ENCODE measurements at regions of chr6 and their contacts with region 1.

Region 1: DNA sequence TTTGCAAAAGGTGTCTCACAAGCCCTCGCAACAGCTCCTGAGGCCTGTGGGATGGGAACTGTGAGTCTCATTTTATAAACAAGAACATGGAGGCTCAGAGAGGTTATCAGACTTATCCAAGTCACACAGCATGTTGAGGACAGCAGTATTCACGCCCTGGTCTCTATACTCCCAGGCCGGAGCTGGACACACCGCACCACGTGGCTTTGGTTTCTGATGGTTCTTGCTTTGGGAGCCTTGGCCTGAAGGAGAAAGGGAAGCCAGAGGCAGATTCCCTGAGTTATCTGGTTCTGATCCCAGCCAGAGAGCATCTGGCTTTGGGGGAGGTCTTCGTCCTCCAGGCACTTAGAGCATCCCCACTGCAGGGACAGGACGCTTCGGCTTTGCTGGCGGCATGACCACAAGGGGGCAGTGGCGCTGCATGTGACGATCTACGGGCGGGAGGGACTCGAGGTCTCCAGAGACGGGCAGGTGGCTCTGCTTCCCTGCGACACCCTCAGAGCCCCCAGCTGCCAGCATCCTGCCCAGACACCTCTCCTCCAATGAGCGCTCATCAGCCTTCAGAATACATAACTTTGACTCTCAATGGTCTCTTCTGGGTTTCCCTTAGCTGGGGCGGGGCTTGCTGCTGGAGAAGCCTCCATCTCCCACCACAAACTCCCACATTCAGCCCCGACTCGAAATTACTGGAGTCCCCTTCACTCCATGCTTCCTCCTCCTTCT is 51.4 kb upstream of the SAYSD1 start:
- DNase-seq: peak; percentile 33
- H3K4me3 ChIP-seq: no peak overlapping the region
- H3K27ac ChIP-seq: no peak overlapping the region
- H3K4me1 ChIP-seq: peaks cover 4% of the 10 kb centered on the region
- H3K27me3 ChIP-seq: no peaks in the 10 kb centered on the region
- CTCF ChIP-seq: peak; percentile 75 to 95

Region 2: DNA sequence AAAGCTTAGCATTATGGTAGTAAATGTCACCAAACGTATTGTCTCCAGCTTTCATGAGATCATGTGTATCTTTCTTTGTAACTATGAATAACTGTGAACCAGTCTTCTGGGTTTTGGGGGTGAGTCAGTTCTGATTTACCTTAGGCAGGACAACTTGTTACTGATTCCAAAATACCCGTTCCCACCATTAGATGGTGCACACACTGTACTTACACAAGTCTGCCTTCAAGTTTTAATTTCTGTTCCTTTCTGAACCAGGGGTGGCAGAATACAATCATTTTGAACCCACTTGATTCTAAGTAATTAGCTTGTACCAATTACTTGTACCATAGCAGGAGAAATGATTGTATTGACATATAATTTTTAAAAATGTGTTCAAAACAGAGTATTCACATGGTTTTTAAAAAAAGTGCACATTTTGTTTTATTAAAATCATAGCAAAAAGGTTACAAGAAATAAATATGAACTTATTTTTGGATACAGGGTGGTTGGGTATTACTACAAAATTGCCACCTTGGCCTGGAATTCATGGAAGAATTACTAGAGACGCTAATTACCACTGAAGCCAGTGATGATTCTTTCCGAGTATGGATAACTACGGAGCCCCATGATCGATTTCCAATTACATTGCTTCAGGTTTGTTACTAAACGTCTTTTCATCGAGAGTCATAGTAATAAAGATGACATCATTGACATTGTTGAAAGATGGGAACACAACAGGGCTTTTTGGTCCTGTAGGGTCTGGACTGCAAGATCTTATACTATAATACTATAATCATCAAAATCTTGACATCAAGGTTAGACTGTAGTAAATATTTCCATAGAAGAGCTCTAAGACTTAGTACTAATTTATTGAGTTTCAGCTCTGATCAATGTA is 192.9 kb before region 1 on chr6:
- CTCF ChIA-PET with region 1: no interaction called
- dilution Hi-C with region 1: no loop called
- in situ Hi-C with region 1: loop called in 1 of 2 experiments (anchors 10 kb)
- intact Hi-C with region 1: loop called (anchors 2 kb)
- DNase-seq: peak; percentile 83
- H3K4me3 ChIP-seq: no peak overlapping the region
- H3K27ac ChIP-seq: no peak overlapping the region
- H3K4me1 ChIP-seq: no peaks in the 10 kb centered on the region
- H3K27me3 ChIP-seq: peaks cover 3% of the 10 kb centered on the region
- CTCF ChIP-seq: peak; percentile 77 to 84

Region 3: DNA sequence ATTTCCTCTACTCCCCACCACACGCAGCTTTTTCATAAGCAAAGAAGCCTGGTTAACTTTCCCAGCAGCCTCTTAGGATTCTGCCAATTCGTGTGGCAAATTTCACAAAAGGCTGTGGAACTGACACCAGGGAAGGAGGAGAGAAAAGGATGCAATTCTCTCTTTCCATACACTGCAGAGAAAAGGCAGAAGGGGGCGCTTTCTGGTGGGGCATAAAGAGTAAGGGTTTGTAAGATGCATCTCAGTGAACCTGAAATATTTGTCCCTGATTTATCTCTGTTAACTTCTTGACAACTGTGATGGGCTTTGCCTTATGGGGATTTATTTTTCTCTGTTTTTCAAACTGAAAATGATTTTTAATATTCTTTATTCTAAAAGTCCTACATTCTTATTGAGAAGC is 163.3 kb before region 1 on chr6:
- CTCF ChIA-PET with region 1: no interaction called
- dilution Hi-C with region 1: no loop called
- in situ Hi-C with region 1: no loop called
- intact Hi-C with region 1: loop called (anchors 10 kb)
- DNase-seq: peak; percentile 9
- H3K4me3 ChIP-seq: no peak overlapping the region
- H3K27ac ChIP-seq: no peak overlapping the region
- H3K4me1 ChIP-seq: no peaks in the 10 kb centered on the region
- H3K27me3 ChIP-seq: peaks cover 8% of the 10 kb centered on the region
- CTCF ChIP-seq: peak; percentile 42 to 61

Region 4: DNA sequence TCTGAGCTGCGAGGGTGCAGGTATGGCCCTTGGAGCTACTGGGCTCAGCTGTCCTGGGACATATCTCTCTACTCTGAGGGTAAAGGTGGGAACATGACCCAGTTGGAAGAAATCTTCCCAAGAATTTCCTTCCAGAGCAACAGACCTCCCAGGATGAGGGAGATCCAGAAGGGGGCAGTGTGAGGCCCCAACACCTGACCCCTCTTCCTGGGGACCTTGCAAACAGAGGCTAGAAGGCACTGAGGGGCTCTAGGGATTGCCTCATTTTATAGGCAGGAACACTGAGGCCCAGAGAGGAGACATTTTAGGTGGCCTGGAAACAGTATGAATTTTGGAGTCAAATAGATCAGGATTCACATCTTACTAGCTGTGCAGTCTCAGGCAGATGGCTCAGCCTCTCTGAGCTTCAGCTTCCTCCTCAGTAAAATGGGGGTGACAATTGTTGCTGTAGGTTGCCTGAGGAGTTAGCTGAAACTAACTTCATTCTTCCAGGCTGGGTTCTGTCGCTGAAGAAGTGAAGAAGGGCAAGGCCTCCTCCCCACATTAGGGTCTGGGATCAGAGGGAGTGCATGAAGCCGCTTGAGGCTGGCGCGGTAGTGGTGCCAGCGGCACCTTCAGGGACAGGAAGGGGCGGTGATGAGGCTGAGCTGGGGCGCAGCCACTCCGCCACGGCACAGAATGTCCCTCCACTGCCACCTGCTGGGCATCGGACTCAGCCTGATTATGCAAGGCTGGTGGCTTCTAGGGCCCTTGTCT is 136.5 kb after region 1 on chr6:
- CTCF ChIA-PET with region 1: interaction called, 10 read pairs
- dilution Hi-C with region 1: no loop called
- in situ Hi-C with region 1: loop called (anchors 5 kb)
- intact Hi-C with region 1: loop called (anchors 1 kb)
- DNase-seq: peak; percentile 56
- H3K4me3 ChIP-seq: peak overlapping the region in 1 of 3 experiments; percentile 16
- H3K27ac ChIP-seq: no peak overlapping the region
- H3K4me1 ChIP-seq: no peaks in the 10 kb centered on the region
- H3K27me3 ChIP-seq: peaks cover 3% of the 10 kb centered on the region
- CTCF ChIP-seq: peak; percentile 75 to 89

Measured in mammary epithelial cell (primary cell).